ENCODE measurements at regions of chr19 and their contacts with region 1.

Region 1: GRCh38 chr19:31054430-31054829 is 294.8 kb downstream of the TSHZ3 start:
- DNase-seq: no peak
- H3K4me3 ChIP-seq: no peak overlapping the region
- H3K27me3 ChIP-seq: 0 out of 2 replicates have a peak, but pooled peaks cover 2% of the 10 kb centered on the region
- CTCF ChIP-seq: peak; percentile 83

Region 2: GRCh38 chr19:31064491-31064890 is 10.1 kb after region 1 on chr19:
- CTCF ChIA-PET with region 1: interaction called, 12 read pairs
- POLR2A ChIA-PET with region 1: no interaction called
- DNase-seq: no peak
- H3K4me3 ChIP-seq: no peak overlapping the region
- H3K27me3 ChIP-seq: no peaks in the 10 kb centered on the region
- CTCF ChIP-seq: no peak